ENCODE measurements at regions of chr3 and their contacts with region 1.

Region 1: GRCh38 chr3:168213920-168214319 is 118.2 kb upstream of the GOLIM4 start:
- DNase-seq: no peak
- ATAC-seq: no peak
- H3K4me3 ChIP-seq: peak overlapping the region in 1 of 12 donors; percentile 23
- H3K27ac ChIP-seq: no peak overlapping the region
- H3K4me1 ChIP-seq: peaks cover 0 to 4% (median 0%) of the 10 kb centered on the region in 12 donors
- H3K27me3 ChIP-seq: no peaks in the 10 kb centered on the region
- CTCF ChIP-seq: no peak
- POLR2A ChIP-seq: no peak

Region 2: DNA sequence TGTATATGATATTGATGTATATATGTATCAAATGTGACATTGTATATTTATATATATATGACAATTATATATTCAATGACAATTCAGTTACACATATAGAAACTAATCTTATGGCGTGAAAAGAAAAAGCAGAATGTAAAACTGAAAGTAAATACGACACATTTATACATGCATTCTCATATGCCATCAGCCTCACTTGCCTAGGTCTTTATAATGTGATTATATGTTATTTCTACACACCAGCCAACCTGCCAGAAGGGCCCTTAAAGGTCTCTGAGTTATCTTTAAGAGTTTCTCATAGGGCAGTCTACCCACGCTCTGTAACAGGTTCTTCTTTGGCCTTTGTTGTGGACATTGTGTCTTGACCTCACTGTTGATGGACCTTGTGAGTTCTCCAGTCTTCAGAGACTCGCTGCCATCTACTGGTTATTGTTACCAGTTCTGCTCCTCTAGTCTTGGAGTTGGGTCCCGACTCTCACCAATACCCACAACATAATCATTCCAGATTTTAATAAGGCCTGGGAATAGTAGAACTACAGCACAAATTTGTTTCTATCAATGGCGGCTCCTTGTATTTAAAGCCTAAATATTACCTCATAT is 253.3 kb after region 1 on chr3:
- intact Hi-C with region 1: loop called (anchors 1 to 5 kb)
- DNase-seq: peak in 2 of 5 donors; percentile 11 to 19
- ATAC-seq: peak; percentile 42 to 85 (median 82)
- H3K4me3 ChIP-seq: peak overlapping the region in 1 of 12 donors; percentile 15
- H3K27ac ChIP-seq: no peak overlapping the region
- H3K4me1 ChIP-seq: no peaks in the 10 kb centered on the region
- H3K27me3 ChIP-seq: no peaks in the 10 kb centered on the region
- CTCF ChIP-seq: peak; percentile 21 to 60 (median 46)
- POLR2A ChIP-seq: no peak

Region 3: GRCh38 chr3:168615493-168616020 is 401.6 kb after region 1 on chr3:
- intact Hi-C with region 1: loop called in 2 of 10 experiments (anchors 5 to 10 kb)
- DNase-seq: no peak
- ATAC-seq: no peak
- H3K4me3 ChIP-seq: no peak overlapping the region
- H3K27ac ChIP-seq: no peak overlapping the region
- H3K4me1 ChIP-seq: no peaks in the 10 kb centered on the region
- H3K27me3 ChIP-seq: peaks cover 0 to 6% (median 0%) of the 10 kb centered on the region in 9 donors
- CTCF ChIP-seq: no peak
- POLR2A ChIP-seq: no peak

Region 4: GRCh38 chr3:168620826-168621225 is 406.9 kb after region 1 on chr3:
- intact Hi-C with region 1: loop called in 2 of 10 experiments (anchors 5 to 10 kb)
- DNase-seq: no peak
- ATAC-seq: no peak
- H3K4me3 ChIP-seq: no peak overlapping the region
- H3K27ac ChIP-seq: no peak overlapping the region
- H3K4me1 ChIP-seq: no peaks in the 10 kb centered on the region
- H3K27me3 ChIP-seq: no peaks in the 10 kb centered on the region
- CTCF ChIP-seq: peak in 11 of 12 donors; percentile 7 to 48 (median 19)
- POLR2A ChIP-seq: no peak